Activated T-helper 2 cell treated with anti-CD3 and anti-CD28 coated beads, Interferon-gamma antibody, Interleukin-2, Interleukin-4, amounts not matched to agents 10 μg/mL and 5 μg/mL and 100 μg/mL, durations not matched to agents 14 hours and 24 hours and 36 hours (primary cell): ENCODE measurements at regions of chr12 and their contacts with region 1.

Region 1: GRCh38 chr12:126761420-126761819 is 1505.5 kb upstream of the TMEM132C start:
- DNase-seq: no peak
- H3K4me3 Mint-ChIP-seq: no peak overlapping the region
- H3K27ac Mint-ChIP-seq: peak overlapping the region; percentile 21
- H3K4me1 Mint-ChIP-seq: peaks cover 8% of the 10 kb centered on the region
- H3K27me3 Mint-ChIP-seq: no peaks in the 10 kb centered on the region

Region 2: DNA sequence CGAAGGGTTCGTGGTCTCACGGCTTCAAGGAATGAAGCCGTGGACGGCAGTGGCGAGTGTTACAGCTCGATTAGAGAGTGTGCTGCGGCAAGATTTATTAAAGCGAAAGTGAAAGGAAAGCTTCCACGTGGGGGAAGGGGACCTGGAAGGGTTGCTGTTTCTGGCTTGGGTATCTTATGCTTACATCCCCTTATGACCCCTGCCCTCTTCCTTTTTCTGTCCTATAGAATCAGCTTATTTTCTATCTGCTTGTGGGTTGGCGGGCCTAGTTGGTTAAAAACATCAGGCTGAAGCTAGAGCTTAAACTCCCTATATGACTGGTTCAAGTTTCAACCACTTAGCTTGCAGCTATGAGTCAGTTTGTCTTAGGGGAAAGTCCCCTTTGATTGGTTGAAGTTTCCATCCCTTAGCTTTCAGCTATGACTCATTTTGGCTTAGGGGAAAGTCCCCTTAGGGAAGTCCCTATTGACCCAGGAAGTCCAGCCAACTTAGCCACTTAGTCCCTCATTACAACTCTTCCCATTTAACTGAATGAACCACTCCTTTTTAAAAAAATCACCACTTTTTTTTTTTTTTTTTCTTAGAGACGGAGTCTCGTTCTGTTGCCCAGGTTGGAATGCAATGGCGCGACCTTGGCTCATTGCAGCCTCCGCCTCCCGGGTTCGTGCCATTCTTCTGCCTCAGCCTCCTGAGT is 10.9 kb after region 1 on chr12:
- intact Hi-C with region 1: loop called (anchors 1 kb)
- DNase-seq: peak; percentile 16
- H3K4me3 Mint-ChIP-seq: peak overlapping the region; percentile 77
- H3K27ac Mint-ChIP-seq: peak overlapping the region; percentile 97
- H3K4me1 Mint-ChIP-seq: peaks cover 17% of the 10 kb centered on the region
- H3K27me3 Mint-ChIP-seq: no peaks in the 10 kb centered on the region